Right ventricle myocardium inferior (tissue), 1 donor: ENCODE measurements at regions of chr4 and their contacts with region 1.

Region 1: GRCh38 chr4:89158884-89159503 is 47.7 kb downstream of the TIGD2 start:
- DNase-seq: no peak
- ATAC-seq: no peak

Region 2: GRCh38 chr4:89434364-89434988 is 275.5 kb after region 1 on chr4:
- intact Hi-C with region 1: loop called (anchors 5 kb)
- DNase-seq: no peak
- ATAC-seq: peak; percentile 37